ENCODE measurements at regions of chr20 and their contacts with region 1.

Region 1: DNA sequence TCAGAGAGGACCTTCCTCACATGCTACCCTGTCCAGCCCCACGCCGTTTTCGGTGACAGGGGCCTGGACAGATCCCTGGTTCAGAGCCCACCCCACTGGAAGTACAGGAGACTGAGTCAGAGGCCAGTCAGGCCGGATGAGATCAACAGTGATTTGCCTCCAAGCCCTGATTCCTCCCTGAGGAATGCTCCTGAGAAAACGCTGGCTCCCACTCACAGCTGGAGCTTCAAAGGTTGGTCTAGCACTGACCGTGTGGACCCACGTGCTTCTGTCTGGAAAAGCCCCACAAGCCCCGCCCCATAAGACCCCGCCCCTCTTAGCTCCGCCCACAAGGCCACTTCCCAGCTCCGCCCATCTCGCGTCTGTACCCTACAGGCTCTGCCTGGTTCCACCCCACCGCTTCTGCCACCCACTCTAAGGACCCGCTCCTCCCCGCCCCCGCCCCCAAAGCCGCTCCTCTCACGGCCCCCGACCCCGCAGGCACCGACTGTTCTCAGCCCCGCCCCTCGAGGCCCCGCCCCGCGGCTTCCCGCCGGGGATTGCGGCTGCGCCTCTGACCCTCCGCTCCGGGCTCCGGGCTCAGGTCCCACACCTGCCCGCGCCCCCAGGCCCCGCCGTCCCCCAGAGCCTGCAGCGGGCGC is 64.9 kb upstream of the BHLHE23 start:
- DNase-seq: peak; percentile 50
- ATAC-seq: peak; percentile 52
- H3K4me3 ChIP-seq: no peak overlapping the region
- H3K27ac ChIP-seq: no peak overlapping the region
- H3K4me1 ChIP-seq: peaks cover 24% of the 10 kb centered on the region
- H3K27me3 ChIP-seq: no peaks in the 10 kb centered on the region
- CTCF ChIP-seq: no peak

Region 2: DNA sequence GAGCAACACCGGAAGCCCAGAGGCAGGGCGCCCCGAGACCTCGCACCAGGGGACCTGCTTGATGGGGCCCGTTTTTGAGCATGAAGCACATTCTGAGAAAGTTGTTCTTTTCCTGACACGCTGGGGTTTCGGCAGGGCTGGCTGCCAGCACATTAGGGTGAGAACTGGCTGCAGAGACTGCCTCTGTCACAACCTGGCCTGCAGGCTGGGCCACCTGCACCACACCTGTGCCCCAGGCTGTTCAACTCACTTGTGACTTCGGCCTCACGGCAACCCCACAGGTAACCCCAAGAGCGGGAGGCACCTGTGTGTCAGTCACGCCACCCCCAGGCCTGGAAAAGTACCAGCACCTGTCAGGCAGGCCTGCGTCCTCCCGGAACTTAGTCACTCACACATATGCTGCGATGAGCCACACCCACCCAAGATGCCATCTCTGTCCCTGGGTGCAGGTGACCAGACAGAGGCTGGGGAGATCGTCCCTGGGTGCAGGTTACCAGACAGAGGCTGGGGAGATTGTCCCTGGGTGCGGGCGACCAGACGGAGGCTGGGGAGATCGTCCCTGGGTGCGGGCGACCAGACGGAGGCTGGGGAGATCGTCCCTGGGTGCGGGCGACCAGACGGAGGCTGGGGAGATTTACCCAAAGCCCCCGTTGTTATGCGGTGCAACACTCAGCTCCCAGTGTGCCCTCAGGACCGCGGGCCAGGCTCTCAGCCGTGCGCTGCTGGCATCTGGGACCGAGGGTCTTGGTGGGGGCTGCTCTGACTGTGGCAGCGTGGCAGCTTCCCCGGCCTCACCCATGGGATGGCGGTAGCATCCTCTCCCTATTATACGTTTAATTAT is 17.6 kb after region 1 on chr20:
- CTCF ChIA-PET with region 1: no interaction called
- POLR2A ChIA-PET with region 1: no interaction called
- in situ Hi-C with region 1: no loop called
- intact Hi-C with region 1: no loop called
- DNase-seq: no peak
- ATAC-seq: no peak
- H3K4me3 ChIP-seq: no peak overlapping the region
- H3K27ac ChIP-seq: no peak overlapping the region
- H3K4me1 ChIP-seq: no peaks in the 10 kb centered on the region
- H3K27me3 ChIP-seq: no peaks in the 10 kb centered on the region; the same call in 1 of the 2 replicates
- CTCF ChIP-seq: no peak

Region 3: GRCh38 chr20:63151554-63152326 is 80.1 kb after region 1 on chr20:
- CTCF ChIA-PET with region 1: interaction called, 10 read pairs
- POLR2A ChIA-PET with region 1: no interaction called
- in situ Hi-C with region 1: no loop called
- intact Hi-C with region 1: no loop called
- DNase-seq: no peak
- ATAC-seq: no peak
- H3K4me3 ChIP-seq: no peak overlapping the region
- H3K27ac ChIP-seq: no peak overlapping the region
- H3K4me1 ChIP-seq: no peaks in the 10 kb centered on the region
- H3K27me3 ChIP-seq: peaks cover 3% of the 10 kb centered on the region; the same call in 1 of the 2 replicates
- CTCF ChIP-seq: no peak